ENCODE measurements at regions of chr13 and their contacts with region 1.

Region 1: DNA sequence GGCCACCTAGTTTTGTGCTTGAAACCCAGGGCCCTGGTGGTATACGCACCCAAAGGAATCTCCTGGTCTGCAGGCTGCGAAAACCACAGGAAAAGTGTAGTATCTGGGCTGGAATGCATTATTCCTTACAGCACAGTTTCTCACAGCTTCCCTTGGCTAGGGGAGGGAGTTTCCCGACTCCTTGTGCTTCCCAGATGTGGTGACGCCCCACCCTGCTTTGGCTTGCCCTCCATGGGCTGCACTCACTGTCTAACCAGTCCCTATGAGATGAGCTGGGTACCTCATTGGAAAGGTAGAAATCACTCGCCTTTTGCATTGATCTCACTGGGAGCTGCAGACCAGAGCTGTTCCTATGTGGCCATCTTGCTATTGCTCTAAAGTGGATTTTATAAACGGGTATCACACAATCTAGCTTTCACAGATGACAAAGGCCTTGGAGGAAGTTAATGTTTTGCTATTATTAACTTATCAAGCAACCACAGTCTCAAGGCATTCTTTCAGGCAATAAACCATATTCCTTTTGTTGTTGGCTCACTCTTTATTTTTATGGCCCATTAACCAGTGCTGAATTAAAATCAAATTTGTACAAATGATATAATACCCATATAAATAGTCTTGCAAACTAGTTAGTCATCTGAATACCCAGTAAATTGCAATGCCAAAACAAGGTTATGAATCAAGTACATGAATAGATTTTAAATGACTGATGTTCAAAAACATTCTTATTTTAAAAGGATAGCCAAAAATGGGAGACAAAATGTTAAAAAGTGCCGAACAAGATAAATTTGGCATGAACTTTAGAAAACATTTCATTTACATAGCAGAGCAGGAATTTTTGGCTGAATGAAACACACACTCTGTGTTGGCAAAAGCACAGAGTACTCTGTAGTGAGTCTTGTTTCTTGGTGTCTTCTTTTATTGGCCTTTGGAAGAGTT is 475.4 kb upstream of the ARGLU1 start:
- DNase-seq: peak in 1 of 2 donors; percentile 47
- H3K4me3 ChIP-seq: no peak overlapping the region
- CTCF ChIP-seq: no peak
- POLR2A ChIP-seq: no peak

Region 2: DNA sequence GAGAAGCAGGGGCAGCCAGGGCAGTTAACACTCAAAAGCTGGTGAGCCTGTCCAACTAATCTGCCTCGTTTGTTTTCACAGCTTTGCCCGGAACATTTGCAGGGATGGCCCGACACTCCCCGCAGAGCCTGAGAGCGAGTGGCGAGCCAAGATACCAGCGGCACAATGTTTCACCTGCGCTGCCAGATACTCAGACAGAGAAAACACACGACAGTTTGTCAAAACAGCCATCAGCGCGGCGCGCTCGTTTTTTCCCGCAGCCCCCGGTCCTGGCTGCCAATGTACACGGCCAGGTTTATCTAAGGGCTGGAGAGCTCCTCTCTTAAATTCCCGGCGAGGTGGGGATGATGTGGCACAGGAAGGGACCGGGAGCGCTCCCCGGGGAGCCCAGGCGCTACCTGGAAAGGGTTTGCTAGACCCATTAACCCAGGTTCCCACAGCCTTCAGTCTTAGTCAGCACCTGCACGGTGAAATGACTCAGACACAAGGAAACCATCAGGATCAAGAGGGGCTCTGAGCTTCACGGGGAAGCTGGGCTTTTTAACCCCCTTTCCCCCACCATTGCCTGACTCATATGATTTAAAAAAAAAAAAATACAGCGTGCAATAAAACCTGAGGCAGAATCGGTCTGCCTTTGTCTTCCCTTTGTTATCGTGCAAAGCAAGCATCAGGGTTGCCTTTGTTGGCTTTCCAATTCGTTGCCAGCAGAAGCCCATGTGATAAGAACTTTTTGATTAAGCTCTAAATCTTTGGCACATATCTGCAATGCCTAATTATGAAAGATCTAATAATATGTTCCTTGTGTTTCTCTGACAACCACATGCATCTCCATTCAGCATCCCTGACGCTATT is 694.0 kb before region 1 on chr13:
- intact Hi-C with region 1: no loop called
- DNase-seq: peak in 1 of 2 donors; percentile 86
- H3K4me3 ChIP-seq: no peak overlapping the region
- CTCF ChIP-seq: no peak
- POLR2A ChIP-seq: no peak

Region 3: DNA sequence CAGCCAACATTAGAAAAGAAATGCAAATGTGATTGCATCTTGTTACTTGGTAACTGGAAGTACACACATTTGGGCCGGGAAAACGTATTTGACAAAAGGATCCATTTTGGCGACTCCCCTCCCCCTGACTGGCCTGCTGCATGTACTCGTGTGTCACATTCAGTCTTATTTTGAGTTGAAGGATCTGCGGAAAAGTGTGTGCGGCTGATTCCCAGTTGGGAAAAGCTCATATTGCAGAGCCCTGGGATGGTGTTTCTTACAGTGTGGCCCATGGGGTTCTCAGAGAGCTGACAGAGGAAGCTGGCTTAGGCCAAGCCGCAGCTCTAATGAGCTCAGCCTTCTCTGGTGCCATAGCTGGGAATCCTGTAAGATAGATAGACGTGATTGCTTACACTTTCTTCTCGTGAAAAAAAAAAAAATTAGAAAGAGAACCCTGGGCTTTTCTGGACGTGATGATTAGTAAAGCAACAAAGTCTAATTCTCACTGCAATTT is 305.1 kb before region 1 on chr13:
- intact Hi-C with region 1: no loop called
- DNase-seq: no peak
- H3K4me3 ChIP-seq: no peak overlapping the region
- CTCF ChIP-seq: no peak
- POLR2A ChIP-seq: no peak

Region 4: GRCh38 chr13:107006661-107007060 is 36.6 kb before region 1 on chr13:
- intact Hi-C with region 1: no loop called
- DNase-seq: no peak
- H3K4me3 ChIP-seq: no peak overlapping the region
- CTCF ChIP-seq: no peak
- POLR2A ChIP-seq: no peak

Region 5: GRCh38 chr13:107205303-107206104 is 162.2 kb after region 1 on chr13:
- intact Hi-C with region 1: no loop called
- DNase-seq: peak in 1 of 2 donors; percentile 28
- H3K4me3 ChIP-seq: no peak overlapping the region
- CTCF ChIP-seq: peak in 1 of 3 donors; percentile 19
- POLR2A ChIP-seq: no peak

Region 6: DNA sequence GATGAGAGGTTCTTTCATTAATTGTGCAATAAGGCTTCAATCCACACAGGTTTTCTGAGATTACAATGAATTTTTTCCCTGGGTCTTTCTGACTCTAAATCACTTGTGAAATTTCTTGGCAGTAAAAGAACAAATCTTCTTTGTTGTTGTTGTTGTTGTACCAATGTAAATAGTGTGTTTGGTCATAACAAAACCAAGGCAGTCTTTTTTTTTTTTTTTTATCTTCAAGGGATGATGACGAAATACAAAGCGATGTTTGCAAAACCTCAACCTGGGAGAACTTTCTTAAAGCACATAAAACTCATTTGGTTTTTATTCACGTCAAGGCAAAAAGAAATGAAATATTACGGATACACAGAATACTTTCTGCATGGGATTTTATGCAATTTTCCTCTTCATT is 710.0 kb after region 1 on chr13:
- intact Hi-C with region 1: loop called (anchors 5 kb)
- DNase-seq: no peak
- H3K4me3 ChIP-seq: no peak overlapping the region
- CTCF ChIP-seq: no peak
- POLR2A ChIP-seq: no peak

Measured in lower leg skin (tissue), 4 donors.